ENCODE measurements at regions of chr2 and their contacts with region 1.

Region 1: DNA sequence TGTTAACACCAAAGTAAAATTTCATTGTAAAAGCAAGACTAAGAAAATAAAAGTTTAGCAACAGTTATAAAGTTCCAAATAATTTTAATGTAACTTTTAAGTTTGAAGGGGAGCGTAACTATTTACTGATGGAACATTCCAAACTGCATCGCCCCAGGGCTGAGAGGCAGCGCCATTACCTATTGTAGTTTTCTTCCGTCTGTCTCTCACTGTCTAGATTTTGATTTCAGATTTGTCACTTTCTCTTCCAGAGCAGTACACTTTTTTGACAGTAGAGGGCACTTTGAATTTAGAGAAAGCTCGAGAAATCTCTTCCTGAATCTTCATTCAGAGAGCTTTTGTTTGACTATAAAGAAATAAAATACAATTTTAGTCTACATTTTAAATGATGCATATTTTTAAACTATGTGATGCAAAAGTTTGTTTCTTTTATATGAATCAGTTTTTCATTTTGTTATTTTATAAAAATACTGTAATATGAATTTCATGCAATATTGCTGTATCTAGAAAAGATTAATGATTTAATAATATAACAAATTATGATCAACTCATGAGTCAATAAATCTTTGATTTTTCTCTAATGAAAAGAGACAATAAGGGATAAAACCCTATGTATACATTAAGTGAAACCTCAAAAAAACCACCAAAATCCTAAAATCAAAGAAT is 389.8 kb downstream of the FIGN start:
- DNase-seq: peak; percentile 81
- ATAC-seq: no peak
- H3K4me3 ChIP-seq: no peak overlapping the region
- H3K27ac ChIP-seq: peak overlapping the region; percentile 100
- H3K4me1 ChIP-seq: peaks cover 36% of the 10 kb centered on the region
- H3K27me3 ChIP-seq: no peaks in the 10 kb centered on the region
- CTCF ChIP-seq: peak; percentile 76; the same call in 1 of the 2 replicates

Region 2: DNA sequence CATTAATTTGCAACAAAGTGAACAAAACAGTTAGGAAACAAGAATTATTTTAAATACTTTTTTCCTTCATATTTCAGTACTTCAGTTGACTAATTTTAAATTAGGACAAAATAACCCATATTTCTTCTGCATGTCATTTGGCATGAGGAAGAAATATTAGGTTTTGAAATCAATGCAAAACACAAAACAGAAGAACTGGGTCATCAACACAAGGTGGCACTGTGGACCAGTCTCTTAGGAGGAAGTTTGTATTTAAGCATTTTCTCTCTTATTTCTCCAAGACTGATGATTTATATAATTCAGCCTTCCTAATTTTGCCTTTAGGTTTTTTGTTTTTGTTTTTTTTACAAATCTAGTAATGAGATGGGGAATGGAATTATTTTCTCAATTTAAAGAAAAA is 154.7 kb before region 1 on chr2:
- CTCF ChIA-PET with region 1: no interaction called
- POLR2A ChIA-PET with region 1: no interaction called
- in situ Hi-C with region 1: no loop called
- intact Hi-C with region 1: loop called (anchors 5 kb)
- DNase-seq: no peak
- ATAC-seq: no peak
- H3K4me3 ChIP-seq: no peak overlapping the region
- H3K27ac ChIP-seq: no peak overlapping the region; the same call in 1 of the 2 replicates
- H3K4me1 ChIP-seq: peaks cover 3% of the 10 kb centered on the region; the same call in 1 of the 2 replicates
- H3K27me3 ChIP-seq: no peaks in the 10 kb centered on the region
- CTCF ChIP-seq: peak; percentile 72; the same call in 1 of the 2 replicates

Region 3: GRCh38 chr2:163441603-163442002 is 95.6 kb after region 1 on chr2:
- CTCF ChIA-PET with region 1: no interaction called
- POLR2A ChIA-PET with region 1: no interaction called
- in situ Hi-C with region 1: no loop called
- intact Hi-C with region 1: no loop called
- DNase-seq: no peak
- ATAC-seq: no peak
- H3K4me3 ChIP-seq: no peak overlapping the region
- H3K27ac ChIP-seq: no peak overlapping the region
- H3K4me1 ChIP-seq: no peaks in the 10 kb centered on the region
- H3K27me3 ChIP-seq: no peaks in the 10 kb centered on the region
- CTCF ChIP-seq: no peak

Region 4: GRCh38 chr2:163601377-163601776 is 255.3 kb after region 1 on chr2:
- CTCF ChIA-PET with region 1: no interaction called
- POLR2A ChIA-PET with region 1: no interaction called
- in situ Hi-C with region 1: no loop called
- intact Hi-C with region 1: loop called (anchors 2 kb)
- DNase-seq: no peak
- ATAC-seq: peak; percentile 79; the same call in 1 of the 2 replicates
- H3K4me3 ChIP-seq: no peak overlapping the region
- H3K27ac ChIP-seq: peak overlapping the region; percentile 87
- H3K4me1 ChIP-seq: peaks cover 63% of the 10 kb centered on the region
- H3K27me3 ChIP-seq: no peaks in the 10 kb centered on the region
- CTCF ChIP-seq: no peak

Region 5: GRCh38 chr2:164055623-164056022 is 709.6 kb after region 1 on chr2:
- CTCF ChIA-PET with region 1: no interaction called
- POLR2A ChIA-PET with region 1: no interaction called
- in situ Hi-C with region 1: no loop called
- intact Hi-C with region 1: loop called (anchors 5 kb)
- DNase-seq: no peak
- ATAC-seq: no peak
- H3K4me3 ChIP-seq: no peak overlapping the region
- H3K27ac ChIP-seq: no peak overlapping the region
- H3K4me1 ChIP-seq: no peaks in the 10 kb centered on the region; the same call in 1 of the 2 replicates
- H3K27me3 ChIP-seq: no peaks in the 10 kb centered on the region
- CTCF ChIP-seq: no peak

Region 6: GRCh38 chr2:164430166-164430783 is 1084.2 kb after region 1 on chr2:
- CTCF ChIA-PET with region 1: no interaction called
- POLR2A ChIA-PET with region 1: no interaction called
- in situ Hi-C with region 1: no loop called
- intact Hi-C with region 1: loop called (anchors 10 kb)
- DNase-seq: peak; percentile 25
- ATAC-seq: peak; percentile 83
- H3K4me3 ChIP-seq: no peak overlapping the region
- H3K27ac ChIP-seq: no peak overlapping the region
- H3K4me1 ChIP-seq: peaks cover 5% of the 10 kb centered on the region
- H3K27me3 ChIP-seq: no peaks in the 10 kb centered on the region
- CTCF ChIP-seq: peak; percentile 75; the same call in 1 of the 2 replicates